CD4-positive, alpha-beta T cell (primary cell): ENCODE measurements at regions of chr1 and their contacts with region 1.

Region 1: DNA sequence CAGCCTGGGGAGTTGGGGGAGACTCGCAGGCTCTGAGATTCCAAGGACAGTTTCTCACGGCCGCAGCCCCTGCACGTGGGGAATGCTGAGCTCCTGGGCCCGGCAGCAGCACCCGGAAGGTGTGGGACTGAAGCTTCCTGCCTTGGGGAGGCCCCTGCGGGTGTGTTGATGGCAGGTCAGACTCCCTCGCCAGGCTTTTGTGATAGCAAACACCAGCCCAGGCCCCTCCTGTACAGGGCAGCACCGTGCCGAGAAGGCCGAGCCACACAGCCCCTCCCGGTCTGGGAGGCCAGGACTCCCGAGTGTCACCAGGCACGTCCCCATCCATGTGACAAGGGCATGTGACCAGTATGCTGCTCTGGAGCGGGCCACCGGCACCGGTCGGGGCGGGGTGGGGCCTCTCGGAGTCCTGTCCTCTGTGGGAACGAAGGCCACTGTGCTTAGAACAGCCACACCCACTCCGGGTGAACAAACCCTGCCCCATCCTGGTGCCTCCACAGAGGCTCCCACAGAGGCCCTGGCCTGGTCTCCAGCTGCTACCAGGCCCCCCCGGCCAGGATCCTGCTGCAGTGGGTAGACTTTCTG is 31.1 kb upstream of the ARHGEF16 start:
- DNase-seq: no peak
- ATAC-seq: no peak
- H3K4me3 ChIP-seq: no peak overlapping the region
- H3K4me3 Mint-ChIP-seq: no peak overlapping the region
- H3K27ac ChIP-seq: no peak overlapping the region
- H3K27ac Mint-ChIP-seq: no peak overlapping the region
- H3K4me1 ChIP-seq: peaks cover 6% of the 10 kb centered on the region
- H3K4me1 Mint-ChIP-seq: no peaks in the 10 kb centered on the region
- H3K27me3 ChIP-seq: peaks cover 0 to 2% of the 10 kb centered on the region in 2 experiments
- H3K27me3 Mint-ChIP-seq: peaks cover 5% of the 10 kb centered on the region
- CTCF ChIP-seq: no peak

Region 2: DNA sequence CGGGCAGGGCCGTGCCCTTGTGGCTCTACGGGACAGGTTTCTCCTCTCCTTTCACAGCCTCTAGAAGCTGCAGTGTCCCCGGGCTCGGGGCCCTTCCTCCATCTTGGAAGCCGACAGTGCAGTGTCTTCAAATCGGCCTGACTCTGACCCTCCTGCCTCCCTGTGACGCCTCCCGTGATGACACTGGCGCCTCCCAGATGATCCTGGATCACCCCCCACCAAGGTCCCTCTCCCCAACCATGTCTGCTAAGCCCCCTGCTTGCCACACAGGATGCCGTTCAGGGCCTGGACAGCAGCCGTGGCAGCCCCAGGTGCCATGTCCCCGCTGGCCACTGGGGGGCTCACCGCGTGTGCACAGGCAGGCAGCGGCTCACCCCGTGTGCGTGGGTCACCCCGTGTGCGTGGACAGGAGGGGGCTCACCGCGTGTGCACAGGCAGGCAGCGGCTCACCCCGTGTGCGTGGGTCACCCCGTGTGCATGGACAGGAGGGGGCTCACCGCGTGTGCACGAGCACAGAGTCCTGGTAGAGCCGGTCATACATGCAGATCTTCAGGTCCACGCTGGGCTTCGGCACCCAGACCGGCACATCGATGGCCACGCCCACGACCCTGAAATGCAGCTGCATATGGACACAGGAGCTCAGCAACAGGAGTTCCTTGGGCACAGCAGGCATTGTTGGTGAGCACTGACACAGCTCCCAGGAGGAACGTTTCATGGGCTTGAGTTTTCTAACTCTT is 1479.3 kb before region 1 on chr1:
- CTCF ChIA-PET with region 1: no interaction called
- POLR2A ChIA-PET with region 1: no interaction called
- intact Hi-C with region 1: loop called in 1 of 2 experiments (anchors 5 kb)
- DNase-seq: peak; percentile 36 to 75 (median 54)
- ATAC-seq: peak; percentile 99
- H3K4me3 ChIP-seq: no peak overlapping the region
- H3K4me3 Mint-ChIP-seq: no peak overlapping the region
- H3K27ac ChIP-seq: no peak overlapping the region
- H3K27ac Mint-ChIP-seq: no peak overlapping the region
- H3K4me1 ChIP-seq: peaks cover 10% of the 10 kb centered on the region
- H3K4me1 Mint-ChIP-seq: no peaks in the 10 kb centered on the region
- H3K27me3 ChIP-seq: no peaks in the 10 kb centered on the region
- H3K27me3 Mint-ChIP-seq: peaks cover 5% of the 10 kb centered on the region
- CTCF ChIP-seq: peak; percentile 82

Region 3: DNA sequence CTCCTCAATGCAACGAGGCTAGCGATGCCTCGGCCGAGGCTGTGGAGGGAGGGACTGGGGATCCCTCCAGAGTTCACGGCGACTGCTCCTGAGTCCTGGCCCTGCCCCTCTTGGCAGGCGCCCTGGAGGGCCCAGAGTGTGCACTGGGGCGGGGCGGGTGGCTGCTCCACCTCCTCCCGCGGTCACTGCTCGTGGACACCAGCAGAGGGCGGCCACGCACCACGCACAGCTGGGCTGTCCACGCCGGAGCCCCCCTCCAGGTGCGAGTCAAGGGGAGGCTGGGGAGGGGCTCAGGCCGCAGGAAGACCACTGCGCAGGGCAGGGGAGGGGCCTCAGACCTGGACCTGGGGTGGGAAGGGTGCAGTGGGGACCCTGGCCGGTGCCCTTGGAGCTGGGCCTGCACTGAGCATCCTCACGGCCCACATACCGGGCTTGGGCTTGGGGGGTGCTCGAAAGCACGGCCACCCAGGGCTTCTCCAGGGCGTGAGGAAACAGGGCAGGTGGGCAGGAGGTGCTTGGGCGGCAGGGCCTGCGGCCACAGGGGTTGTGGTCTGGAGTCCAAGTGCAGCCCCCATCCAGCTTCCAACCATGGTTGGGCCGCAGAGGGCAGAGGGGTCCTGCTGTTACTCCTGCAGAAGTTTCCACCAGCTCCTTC is 601.2 kb before region 1 on chr1:
- CTCF ChIA-PET with region 1: no interaction called
- POLR2A ChIA-PET with region 1: no interaction called
- intact Hi-C with region 1: loop called in 1 of 2 experiments (anchors 5 kb)
- DNase-seq: peak; percentile 21 to 73 (median 45)
- ATAC-seq: peak; percentile 88
- H3K4me3 ChIP-seq: no peak overlapping the region
- H3K4me3 Mint-ChIP-seq: no peak overlapping the region
- H3K27ac ChIP-seq: no peak overlapping the region
- H3K27ac Mint-ChIP-seq: no peak overlapping the region
- H3K4me1 ChIP-seq: peaks cover 11% of the 10 kb centered on the region
- H3K4me1 Mint-ChIP-seq: no peaks in the 10 kb centered on the region
- H3K27me3 ChIP-seq: peaks cover 6 to 11% of the 10 kb centered on the region in 2 experiments
- H3K27me3 Mint-ChIP-seq: peaks cover 4% of the 10 kb centered on the region
- CTCF ChIP-seq: peak; percentile 76

Region 4: GRCh38 chr1:3012456-3013291 is 410.7 kb before region 1 on chr1:
- CTCF ChIA-PET with region 1: no interaction called
- POLR2A ChIA-PET with region 1: no interaction called
- intact Hi-C with region 1: loop called in 1 of 2 experiments (anchors 1 kb)
- DNase-seq: peak in 13 of 14 experiments; percentile 27 to 71 (median 46)
- ATAC-seq: peak; percentile 54
- H3K4me3 ChIP-seq: no peak overlapping the region
- H3K4me3 Mint-ChIP-seq: no peak overlapping the region
- H3K27ac ChIP-seq: no peak overlapping the region
- H3K27ac Mint-ChIP-seq: no peak overlapping the region
- H3K4me1 ChIP-seq: peaks cover 6% of the 10 kb centered on the region
- H3K4me1 Mint-ChIP-seq: no peaks in the 10 kb centered on the region
- H3K27me3 ChIP-seq: peaks cover 0 to 8% of the 10 kb centered on the region in 2 experiments
- H3K27me3 Mint-ChIP-seq: peaks cover 19% of the 10 kb centered on the region
- CTCF ChIP-seq: peak; percentile 84

Region 5: GRCh38 chr1:3384407-3384806 is 38.9 kb before region 1 on chr1:
- CTCF ChIA-PET with region 1: no interaction called
- POLR2A ChIA-PET with region 1: no interaction called
- intact Hi-C with region 1: no loop called
- DNase-seq: peak in 2 of 14 experiments; percentile 2 to 38
- ATAC-seq: no peak
- H3K4me3 ChIP-seq: no peak overlapping the region
- H3K4me3 Mint-ChIP-seq: no peak overlapping the region
- H3K27ac ChIP-seq: no peak overlapping the region
- H3K27ac Mint-ChIP-seq: no peak overlapping the region
- H3K4me1 ChIP-seq: no peaks in the 10 kb centered on the region
- H3K4me1 Mint-ChIP-seq: no peaks in the 10 kb centered on the region
- H3K27me3 ChIP-seq: no peaks in the 10 kb centered on the region
- H3K27me3 Mint-ChIP-seq: peaks cover 9% of the 10 kb centered on the region
- CTCF ChIP-seq: no peak